Vagina (tissue), 2 donors: ENCODE measurements at regions of chr5 and their contacts with region 1.

Region 1: DNA sequence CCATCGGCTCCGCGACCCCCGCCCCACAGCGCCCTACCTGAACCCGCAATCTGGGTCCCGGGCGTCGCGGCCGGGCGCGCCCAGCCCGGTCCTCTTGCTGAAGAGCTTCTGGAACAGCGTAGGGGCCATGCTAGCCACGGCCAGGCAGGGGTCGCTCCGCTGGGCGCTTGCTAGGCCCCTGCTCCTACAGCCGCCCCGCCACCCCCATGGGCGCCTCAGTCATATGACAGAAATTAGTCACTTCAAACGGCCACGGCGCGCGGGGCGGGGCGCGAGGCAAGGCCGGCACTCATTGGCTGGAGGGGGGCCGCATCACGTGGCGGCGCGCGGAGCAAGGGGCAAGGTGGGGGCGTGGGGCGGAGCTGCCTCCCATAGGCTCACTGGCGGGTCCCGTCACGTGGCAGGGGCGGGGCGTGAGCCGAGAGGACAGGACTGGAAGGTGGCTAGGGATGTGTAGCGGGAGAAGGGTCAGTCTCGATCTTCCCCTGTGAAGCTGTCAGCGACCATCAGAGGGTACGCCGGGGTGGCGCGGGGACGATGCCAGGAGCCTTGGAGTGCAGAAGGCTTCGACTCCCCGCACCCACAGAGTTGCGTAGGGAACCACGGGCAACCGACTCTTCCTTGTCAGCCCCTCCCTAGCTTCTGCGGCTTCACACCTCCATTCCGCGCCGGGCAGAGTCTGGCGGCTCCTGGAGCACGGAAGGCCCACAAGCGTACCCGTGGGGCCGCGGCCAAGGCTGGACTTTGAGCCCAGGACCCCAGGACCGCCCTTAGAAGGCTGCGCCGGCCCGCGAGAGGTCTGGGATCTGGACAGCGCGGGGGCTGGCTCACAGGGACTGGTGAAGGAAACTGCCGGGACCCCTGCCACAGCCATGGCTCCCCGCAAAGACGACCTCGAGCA is at the start of gene FNIP1:
- DNase-seq: peak; percentile 99 to 100
- H3K4me3 ChIP-seq: peak within 1 kb of the TSS; percentile 52 to 86
- H3K27ac ChIP-seq: peak within 1 kb of the TSS; percentile 99
- H3K4me1 ChIP-seq: peaks cover 44% of the 10 kb centered on the region
- H3K27me3 ChIP-seq: no peaks in the 10 kb centered on the region
- CTCF ChIP-seq: no peak
- POLR2A ChIP-seq: peak; percentile 42 to 96
- total RNA-seq, gene FNIP1: 29.5 TPM

Region 2: GRCh38 chr5:131610198-131611063 is 186.6 kb before region 1 on chr5:
- intact Hi-C with region 1: no loop called
- DNase-seq: no peak
- H3K4me3 ChIP-seq: no peak overlapping the region
- H3K27ac ChIP-seq: no peak overlapping the region
- H3K4me1 ChIP-seq: peaks cover 8% of the 10 kb centered on the region
- H3K27me3 ChIP-seq: no peaks in the 10 kb centered on the region
- CTCF ChIP-seq: no peak
- POLR2A ChIP-seq: no peak

Region 3: DNA sequence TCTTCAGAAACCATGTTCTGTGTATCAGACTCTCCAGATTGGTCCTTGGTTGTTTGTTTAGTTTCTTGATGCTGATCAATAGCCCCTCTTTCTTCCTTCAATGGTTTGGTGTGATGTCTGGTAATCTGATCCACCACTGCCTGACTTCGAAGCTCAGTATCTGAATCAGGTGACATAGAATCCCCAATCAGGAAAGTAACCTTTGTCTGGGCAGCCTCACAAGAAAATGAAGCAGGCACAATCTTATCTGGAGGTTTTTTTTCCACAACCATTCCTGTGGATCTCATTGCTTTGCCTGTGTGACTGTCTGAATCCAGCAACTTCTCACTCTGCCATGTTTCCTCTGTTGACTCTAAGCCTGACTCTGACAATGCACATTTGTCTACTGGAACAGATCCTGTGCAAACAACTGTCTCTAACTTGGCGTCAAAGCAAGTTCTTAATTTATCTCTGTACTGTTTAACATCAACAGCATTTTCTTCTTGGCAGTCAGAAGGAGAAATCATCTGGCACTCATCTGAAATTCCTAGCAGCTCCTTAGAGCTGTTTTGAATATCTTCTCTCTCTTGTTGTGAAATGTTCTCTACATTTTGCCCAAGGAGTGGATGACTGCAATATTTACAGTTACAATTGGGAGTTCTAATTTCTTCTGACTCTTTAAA is 124.9 kb before region 1 on chr5:
- intact Hi-C with region 1: loop called (anchors 5 kb)
- DNase-seq: no peak
- H3K4me3 ChIP-seq: no peak overlapping the region
- H3K27ac ChIP-seq: peak overlapping the region; percentile 73
- H3K4me1 ChIP-seq: peaks cover 35% of the 10 kb centered on the region
- H3K27me3 ChIP-seq: no peaks in the 10 kb centered on the region
- CTCF ChIP-seq: no peak
- POLR2A ChIP-seq: no peak

Region 4: DNA sequence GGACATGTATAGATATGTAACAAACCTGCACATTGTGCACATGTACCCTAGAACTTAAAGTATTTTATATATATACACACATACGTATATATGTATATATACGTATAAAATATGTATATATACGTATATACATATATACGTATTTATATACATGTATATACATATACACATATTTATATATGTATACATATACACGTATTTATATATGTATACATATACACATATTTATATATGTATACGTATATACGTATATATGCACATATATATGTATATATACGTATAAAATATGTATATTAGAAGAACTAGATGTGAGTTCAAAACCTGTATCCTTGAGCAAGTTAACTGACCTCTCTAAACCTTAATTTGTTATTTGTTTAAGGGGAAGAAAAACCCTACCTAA is 61.6 kb before region 1 on chr5:
- intact Hi-C with region 1: no loop called
- DNase-seq: no peak
- H3K4me3 ChIP-seq: no peak overlapping the region
- H3K27ac ChIP-seq: no peak overlapping the region
- H3K4me1 ChIP-seq: no peaks in the 10 kb centered on the region
- H3K27me3 ChIP-seq: no peaks in the 10 kb centered on the region
- CTCF ChIP-seq: no peak
- POLR2A ChIP-seq: no peak

Region 5: GRCh38 chr5:131883984-131884383 is 86.9 kb after region 1 on chr5:
- intact Hi-C with region 1: no loop called
- DNase-seq: no peak
- H3K4me3 ChIP-seq: no peak overlapping the region
- H3K27ac ChIP-seq: no peak overlapping the region
- H3K4me1 ChIP-seq: no peaks in the 10 kb centered on the region
- H3K27me3 ChIP-seq: no peaks in the 10 kb centered on the region
- CTCF ChIP-seq: no peak
- POLR2A ChIP-seq: no peak